Motor neuron (in vitro differentiated cells): ENCODE measurements at regions of chr11 and their contacts with region 1.

Region 1: DNA sequence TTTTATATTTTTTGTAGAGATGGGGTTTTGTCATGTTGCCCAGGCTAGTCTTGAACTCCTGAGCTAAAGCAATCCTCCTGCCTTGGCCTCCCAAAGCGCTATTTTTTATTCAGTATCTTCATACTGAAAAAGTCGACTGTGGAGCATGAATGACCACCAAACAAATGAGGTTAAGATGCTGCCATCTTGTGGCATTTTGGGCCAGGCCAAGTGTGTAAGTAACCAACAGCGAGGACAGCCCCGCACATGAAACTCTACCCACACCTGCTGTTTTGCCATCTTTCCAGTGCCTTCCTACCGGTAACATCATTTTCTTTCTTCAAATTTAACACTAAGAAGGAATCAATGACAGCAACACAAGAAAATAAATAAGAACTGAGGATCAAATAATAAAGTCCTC is 32.2 kb upstream of the AQP11 start:
- ATAC-seq: no peak
- H3K4me3 ChIP-seq: no peak overlapping the region
- H3K27ac ChIP-seq: no peak overlapping the region
- H3K4me1 ChIP-seq: no peaks in the 10 kb centered on the region

Region 2: DNA sequence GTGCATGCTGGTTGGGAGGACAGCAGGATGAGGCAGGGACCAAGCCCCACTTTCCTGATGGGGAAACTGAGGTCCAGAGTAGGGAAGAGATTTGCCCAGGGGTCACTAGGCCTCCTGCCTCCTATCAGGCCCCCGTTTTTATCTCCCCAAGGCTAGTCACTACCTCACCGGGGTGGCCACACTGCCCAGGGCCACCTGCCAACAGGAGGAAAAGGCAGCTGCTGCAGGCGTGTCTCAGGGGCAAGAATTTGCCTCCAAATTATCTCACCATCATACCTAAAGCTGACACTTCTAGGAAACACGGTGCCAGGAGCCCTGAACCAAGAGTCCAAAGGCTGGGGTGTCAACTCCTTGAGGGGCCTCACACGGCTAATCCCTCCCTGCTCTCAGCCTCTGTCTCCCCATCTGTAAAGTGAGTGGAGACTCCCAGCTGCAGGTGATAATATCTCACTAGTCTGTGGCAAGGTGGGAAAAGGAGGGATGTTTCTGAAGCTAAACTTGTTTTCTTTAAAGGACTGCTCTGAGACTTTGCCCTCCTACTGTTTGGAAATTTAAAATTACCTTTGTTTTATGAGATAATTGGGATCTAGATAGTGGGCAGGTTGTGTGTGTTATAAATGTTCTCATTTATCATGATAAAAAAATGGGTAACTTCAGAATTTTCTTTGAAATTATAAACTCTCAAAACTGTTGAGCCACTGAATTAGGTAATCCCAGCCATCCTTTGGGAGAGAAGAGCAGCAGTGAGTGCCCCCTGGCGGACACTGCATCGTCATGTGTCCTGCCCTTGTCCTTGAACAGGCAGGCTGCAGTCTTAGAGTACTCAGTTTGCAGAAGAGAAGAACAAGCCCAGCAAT is 369.6 kb before region 1 on chr11:
- in situ Hi-C with region 1: loop called in 1 of 9 experiments (anchors 10 kb)
- ATAC-seq: peak; percentile 58 to 92 (median 84)
- H3K4me3 ChIP-seq: no peak overlapping the region
- H3K27ac ChIP-seq: no peak overlapping the region
- H3K4me1 ChIP-seq: peaks cover 13 to 14% of the 10 kb centered on the region in 2 donors

Region 3: GRCh38 chr11:77287615-77288273 is 269.8 kb before region 1 on chr11:
- in situ Hi-C with region 1: no loop called
- ATAC-seq: peak in 3 of 8 experiments; percentile 40 to 100 (median 100)
- H3K4me3 ChIP-seq: no peak overlapping the region
- H3K27ac ChIP-seq: no peak overlapping the region
- H3K4me1 ChIP-seq: no peaks in the 10 kb centered on the region

Region 4: GRCh38 chr11:77449060-77449521 is 108.5 kb before region 1 on chr11:
- in situ Hi-C with region 1: no loop called
- ATAC-seq: no peak
- H3K4me3 ChIP-seq: no peak overlapping the region
- H3K27ac ChIP-seq: peak overlapping the region in 1 of 2 donors; percentile 25
- H3K4me1 ChIP-seq: peaks cover 9 to 13% of the 10 kb centered on the region in 2 donors

Region 5: DNA sequence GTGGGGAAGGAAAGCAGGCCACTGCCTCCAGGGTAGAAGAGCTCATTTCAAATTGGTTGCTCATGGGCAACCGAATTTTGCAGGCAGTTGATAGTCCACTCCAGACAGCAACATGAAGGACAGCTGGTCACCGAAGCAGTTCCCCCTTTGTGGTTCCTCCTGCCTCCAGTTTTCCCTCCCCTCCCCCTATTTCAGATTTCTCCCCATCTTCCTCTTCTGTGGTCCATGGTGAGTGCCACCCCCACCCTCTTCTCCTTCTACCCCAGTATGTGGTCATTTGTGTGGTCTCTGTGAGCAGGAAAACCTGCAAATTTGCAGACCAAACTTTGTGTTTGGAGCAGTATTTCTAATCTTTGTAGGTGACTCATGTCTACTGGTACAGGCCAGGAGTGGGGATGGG is 45.5 kb before region 1 on chr11:
- in situ Hi-C with region 1: no loop called
- ATAC-seq: no peak
- H3K4me3 ChIP-seq: no peak overlapping the region
- H3K27ac ChIP-seq: no peak overlapping the region
- H3K4me1 ChIP-seq: no peaks in the 10 kb centered on the region

Region 6: GRCh38 chr11:78574386-78575381 is 1017.1 kb after region 1 on chr11 and contains the start of gene NARS2:
- in situ Hi-C with region 1: no loop called
- ATAC-seq: peak; percentile 93 to 97 (median 96)
- H3K4me3 ChIP-seq: peak within 1 kb of the TSS; percentile 51 to 87 (median 80)
- H3K27ac ChIP-seq: peak within 1 kb of the TSS; percentile 76 to 84
- H3K4me1 ChIP-seq: peaks cover 0 to 6% of the 10 kb centered on the region in 2 donors
- total RNA-seq, gene NARS2: 11.5 to 36.0 (median 28.1) TPM